CD4-positive, alpha-beta T cell (primary cell): ENCODE measurements at regions of chr19 and their contacts with region 1.

Region 1: DNA sequence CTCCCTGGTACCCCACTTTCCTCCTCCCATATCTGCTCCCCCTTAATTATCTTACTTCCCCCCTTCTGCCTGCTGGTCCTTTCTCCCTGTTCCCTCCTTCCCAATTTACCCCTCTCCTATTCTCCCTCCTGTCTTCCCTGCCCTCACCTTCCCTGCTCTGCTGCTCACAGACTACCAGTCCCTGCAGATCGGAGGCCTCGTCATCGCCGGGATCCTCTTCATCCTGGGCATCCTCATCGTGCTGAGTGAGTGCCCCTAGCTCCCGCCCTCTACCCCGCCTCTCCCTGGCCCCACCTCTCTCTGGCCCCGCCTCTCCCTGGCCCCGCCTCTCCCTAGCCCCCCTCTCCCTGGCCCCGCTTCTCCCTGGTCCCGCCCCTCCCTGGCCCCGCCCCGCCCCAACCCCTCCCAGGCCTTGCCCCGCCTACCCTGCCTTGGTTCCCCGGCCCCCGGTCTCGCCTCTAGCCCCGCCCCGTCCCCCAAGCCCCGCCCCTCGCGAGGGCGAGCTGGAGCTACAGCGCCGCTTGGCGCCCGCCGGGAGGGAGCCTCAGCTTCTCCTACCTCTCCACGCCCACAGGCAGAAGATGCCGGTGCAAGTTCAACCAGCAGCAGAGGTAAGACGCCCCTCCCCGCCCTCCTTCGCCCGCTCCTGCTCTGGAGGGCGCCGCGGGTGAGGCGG is 2.0 kb upstream of the FXYD7 start:
- DNase-seq: peak; percentile 91 to 99 (median 96)
- ATAC-seq: peak; percentile 87
- H3K4me3 ChIP-seq: peak overlapping the region; percentile 42
- H3K4me3 Mint-ChIP-seq: peak overlapping the region; percentile 90
- H3K27ac ChIP-seq: no peak overlapping the region
- H3K27ac Mint-ChIP-seq: peak overlapping the region; percentile 79
- H3K4me1 ChIP-seq: peaks cover 54% of the 10 kb centered on the region
- H3K4me1 Mint-ChIP-seq: peaks cover 43% of the 10 kb centered on the region
- H3K27me3 ChIP-seq: no peaks in the 10 kb centered on the region
- H3K27me3 Mint-ChIP-seq: no peaks in the 10 kb centered on the region
- CTCF ChIP-seq: no peak

Region 2: DNA sequence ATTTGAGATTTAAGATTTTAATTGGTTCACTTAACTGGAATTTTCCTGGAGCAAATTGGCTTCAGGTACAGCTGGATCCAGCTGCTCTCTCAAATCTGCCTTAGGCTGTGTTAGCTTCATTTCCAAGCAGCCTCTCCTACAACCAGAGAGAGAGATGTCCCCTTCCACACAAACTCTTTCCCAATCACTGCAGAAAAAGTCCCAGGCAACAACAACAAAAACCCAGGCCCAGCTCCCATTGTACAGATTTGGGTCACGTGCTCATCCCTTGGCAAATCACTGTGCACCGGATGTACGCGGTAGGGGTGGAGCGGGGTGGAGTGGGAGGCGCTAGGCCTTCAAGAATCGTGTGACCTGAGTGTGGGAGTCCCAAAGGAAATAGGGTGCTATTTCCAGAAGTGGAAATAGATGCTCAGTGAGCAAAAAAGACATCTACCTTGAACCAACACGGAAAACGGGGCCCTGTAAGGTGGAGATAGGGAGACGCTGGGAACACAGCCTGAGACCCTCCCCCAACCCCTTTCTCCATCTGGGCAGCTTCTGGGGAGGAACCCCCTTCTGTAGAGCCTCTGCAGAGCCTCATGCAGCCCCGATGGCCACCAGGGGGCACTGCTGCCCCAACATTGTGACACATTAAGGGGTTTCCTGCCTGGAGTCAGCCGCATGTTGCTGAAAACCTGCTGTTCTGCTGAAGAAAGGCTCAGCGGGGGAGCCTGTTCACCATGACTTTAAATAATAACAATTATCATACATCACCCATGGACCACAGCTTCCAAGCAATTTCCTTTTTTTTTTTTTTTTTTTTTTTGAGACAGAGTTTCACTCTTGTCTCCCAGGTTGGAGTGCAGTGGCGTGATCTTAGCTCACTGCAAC is 74.2 kb before region 1 on chr19:
- CTCF ChIA-PET with region 1: interaction called, 10 read pairs
- POLR2A ChIA-PET with region 1: no interaction called
- intact Hi-C with region 1: loop called in 1 of 2 experiments (anchors 1 kb)
- DNase-seq: peak; percentile 83 to 94 (median 88)
- ATAC-seq: peak; percentile 95
- H3K4me3 ChIP-seq: no peak overlapping the region
- H3K4me3 Mint-ChIP-seq: no peak overlapping the region
- H3K27ac ChIP-seq: no peak overlapping the region
- H3K27ac Mint-ChIP-seq: no peak overlapping the region
- H3K4me1 ChIP-seq: peaks cover 8% of the 10 kb centered on the region
- H3K4me1 Mint-ChIP-seq: peaks cover 8% of the 10 kb centered on the region
- H3K27me3 ChIP-seq: peaks cover 0 to 5% of the 10 kb centered on the region in 2 experiments
- H3K27me3 Mint-ChIP-seq: no peaks in the 10 kb centered on the region
- CTCF ChIP-seq: peak; percentile 87

Region 3: GRCh38 chr19:35124098-35125060 is 16.7 kb before region 1 on chr19:
- CTCF ChIA-PET with region 1: interaction called, 3 read pairs
- POLR2A ChIA-PET with region 1: interaction called, 15 read pairs
- intact Hi-C with region 1: no loop called
- DNase-seq: peak; percentile 74 to 94 (median 86)
- ATAC-seq: peak; percentile 98
- H3K4me3 ChIP-seq: peak overlapping the region; percentile 58
- H3K4me3 Mint-ChIP-seq: peak overlapping the region; percentile 75
- H3K27ac ChIP-seq: no peak overlapping the region
- H3K27ac Mint-ChIP-seq: peak overlapping the region; percentile 64
- H3K4me1 ChIP-seq: peaks cover 20% of the 10 kb centered on the region
- H3K4me1 Mint-ChIP-seq: peaks cover 13% of the 10 kb centered on the region
- H3K27me3 ChIP-seq: no peaks in the 10 kb centered on the region
- H3K27me3 Mint-ChIP-seq: no peaks in the 10 kb centered on the region
- CTCF ChIP-seq: no peak

Region 4: GRCh38 chr19:35193869-35194665 is 53.0 kb after region 1 on chr19:
- CTCF ChIA-PET with region 1: no interaction called
- POLR2A ChIA-PET with region 1: no interaction called
- intact Hi-C with region 1: no loop called
- DNase-seq: no peak
- ATAC-seq: no peak
- H3K4me3 ChIP-seq: no peak overlapping the region
- H3K4me3 Mint-ChIP-seq: no peak overlapping the region
- H3K27ac ChIP-seq: no peak overlapping the region
- H3K27ac Mint-ChIP-seq: no peak overlapping the region
- H3K4me1 ChIP-seq: peaks cover 5% of the 10 kb centered on the region
- H3K4me1 Mint-ChIP-seq: peaks cover 16% of the 10 kb centered on the region
- H3K27me3 ChIP-seq: no peaks in the 10 kb centered on the region
- H3K27me3 Mint-ChIP-seq: no peaks in the 10 kb centered on the region
- CTCF ChIP-seq: peak; percentile 27

Region 5: DNA sequence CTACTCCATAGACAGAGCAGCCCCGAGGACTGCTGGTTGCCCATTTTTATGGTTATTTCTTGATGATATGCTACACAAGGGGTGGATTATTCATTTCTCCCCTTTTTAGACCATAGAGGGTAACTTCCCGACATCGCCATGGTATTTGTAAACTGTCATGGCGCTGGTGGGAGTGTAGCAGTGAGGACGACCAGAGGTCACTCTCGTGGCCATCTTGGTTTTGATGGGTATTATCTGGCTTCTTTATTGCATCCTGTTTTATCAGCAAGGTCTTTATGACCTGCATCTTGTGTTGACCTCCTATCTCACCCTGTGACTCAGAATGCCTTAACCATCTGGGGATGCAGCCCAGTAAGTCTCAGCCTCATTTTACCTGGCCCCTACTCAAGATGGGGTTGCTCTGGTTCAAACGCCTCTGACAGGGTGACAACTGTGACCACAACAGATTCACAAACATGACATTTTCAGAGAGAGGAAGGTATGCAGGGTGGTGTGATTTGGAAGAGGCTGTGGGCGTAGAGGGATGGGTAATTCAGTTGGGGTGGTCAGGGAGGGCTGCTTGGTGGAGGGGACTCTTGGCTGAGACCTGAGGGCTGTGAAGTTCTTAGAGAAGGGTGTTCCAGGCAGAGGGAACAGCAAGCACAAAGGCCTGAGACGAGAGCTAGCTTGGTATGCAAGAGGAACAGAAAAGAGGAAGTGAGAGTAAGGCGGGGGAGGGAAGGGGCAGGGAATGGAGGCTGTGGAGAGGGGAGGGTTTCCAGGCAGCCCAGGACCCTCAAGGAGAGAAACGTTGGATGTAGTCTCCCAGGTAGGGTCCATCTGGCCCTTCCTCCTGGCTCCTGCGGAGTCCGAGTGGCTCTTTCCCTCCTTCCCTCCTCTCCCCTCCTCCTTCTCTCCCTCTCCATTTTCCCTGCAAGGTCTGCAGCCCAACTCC is 64.0 kb after region 1 on chr19:
- CTCF ChIA-PET with region 1: interaction called, 6 read pairs
- POLR2A ChIA-PET with region 1: interaction called, 38 read pairs
- intact Hi-C with region 1: no loop called
- DNase-seq: peak in 4 of 14 experiments; percentile 38 to 60 (median 58)
- ATAC-seq: no peak
- H3K4me3 ChIP-seq: no peak overlapping the region
- H3K4me3 Mint-ChIP-seq: peak overlapping the region; percentile 6
- H3K27ac ChIP-seq: peak overlapping the region; percentile 84 to 98
- H3K27ac Mint-ChIP-seq: peak overlapping the region; percentile 98
- H3K4me1 ChIP-seq: peaks cover 78% of the 10 kb centered on the region
- H3K4me1 Mint-ChIP-seq: peaks cover 81% of the 10 kb centered on the region
- H3K27me3 ChIP-seq: no peaks in the 10 kb centered on the region
- H3K27me3 Mint-ChIP-seq: no peaks in the 10 kb centered on the region
- CTCF ChIP-seq: no peak

Region 6: GRCh38 chr19:35468637-35469036 is 327.5 kb after region 1 on chr19:
- CTCF ChIA-PET with region 1: no interaction called
- POLR2A ChIA-PET with region 1: no interaction called
- intact Hi-C with region 1: loop called in 1 of 2 experiments (anchors 10 kb)
- DNase-seq: peak; percentile 42 to 85 (median 58)
- ATAC-seq: peak; percentile 100
- H3K4me3 ChIP-seq: no peak overlapping the region
- H3K4me3 Mint-ChIP-seq: no peak overlapping the region
- H3K27ac ChIP-seq: no peak overlapping the region
- H3K27ac Mint-ChIP-seq: no peak overlapping the region
- H3K4me1 ChIP-seq: peaks cover 12% of the 10 kb centered on the region
- H3K4me1 Mint-ChIP-seq: peaks cover 1% of the 10 kb centered on the region
- H3K27me3 ChIP-seq: no peaks in the 10 kb centered on the region
- H3K27me3 Mint-ChIP-seq: no peaks in the 10 kb centered on the region
- CTCF ChIP-seq: peak; percentile 55